Activated naive CD8-positive, alpha-beta T cell treated with anti-CD3 and anti-CD28 coated beads, Interleukin-2, amount 10 ng/mL, durations not matched to agents 7 days and 5 days (primary cell): ENCODE measurements at regions of chr7 and their contacts with region 1.

Region 1: GRCh38 chr7:158863611-158864506 is 7.5 kb downstream of the DYNC2I1 start:
- DNase-seq: peak; percentile 48
- ATAC-seq: peak; percentile 48
- H3K4me3 Mint-ChIP-seq: peak overlapping the region; percentile 85
- H3K27ac Mint-ChIP-seq: peak overlapping the region; percentile 92
- H3K4me1 Mint-ChIP-seq: peaks cover 53% of the 10 kb centered on the region
- H3K27me3 Mint-ChIP-seq: no peaks in the 10 kb centered on the region

Region 2: GRCh38 chr7:158638001-158638400 is 225.9 kb before region 1 on chr7:
- POLR2A ChIA-PET with region 1: no interaction called
- DNase-seq: no peak
- ATAC-seq: no peak
- H3K4me3 Mint-ChIP-seq: no peak overlapping the region
- H3K27ac Mint-ChIP-seq: no peak overlapping the region
- H3K4me1 Mint-ChIP-seq: no peaks in the 10 kb centered on the region
- H3K27me3 Mint-ChIP-seq: no peaks in the 10 kb centered on the region

Region 3: GRCh38 chr7:158704704-158705468 is 159.0 kb before region 1 on chr7 and contains the start of gene NCAPG2:
- POLR2A ChIA-PET with region 1: interaction called, 12 read pairs
- DNase-seq: peak; percentile 99
- ATAC-seq: peak; percentile 98
- H3K4me3 Mint-ChIP-seq: peak within 1 kb of the TSS; percentile 95
- H3K27ac Mint-ChIP-seq: peak within 1 kb of the TSS; percentile 91
- H3K4me1 Mint-ChIP-seq: peaks cover 39% of the 10 kb centered on the region
- H3K27me3 Mint-ChIP-seq: no peaks in the 10 kb centered on the region
- total RNA-seq, gene NCAPG2: 123 to 126 TPM

Region 4: GRCh38 chr7:158782761-158783401 is 81.0 kb before region 1 on chr7:
- POLR2A ChIA-PET with region 1: no interaction called
- DNase-seq: no peak
- ATAC-seq: no peak
- H3K4me3 Mint-ChIP-seq: no peak overlapping the region
- H3K27ac Mint-ChIP-seq: no peak overlapping the region
- H3K4me1 Mint-ChIP-seq: peaks cover 17% of the 10 kb centered on the region
- H3K27me3 Mint-ChIP-seq: no peaks in the 10 kb centered on the region

Region 5: GRCh38 chr7:158811461-158811860 is 52.4 kb before region 1 on chr7:
- POLR2A ChIA-PET with region 1: interaction called, 15 read pairs
- DNase-seq: no peak
- ATAC-seq: peak; percentile 7
- H3K4me3 Mint-ChIP-seq: peak overlapping the region; percentile 74
- H3K27ac Mint-ChIP-seq: peak overlapping the region; percentile 91
- H3K4me1 Mint-ChIP-seq: peaks cover 65% of the 10 kb centered on the region
- H3K27me3 Mint-ChIP-seq: no peaks in the 10 kb centered on the region

Region 6: GRCh38 chr7:158824028-158824427 is 39.8 kb before region 1 on chr7:
- POLR2A ChIA-PET with region 1: interaction called, 12 read pairs
- DNase-seq: no peak
- ATAC-seq: peak; percentile 77
- H3K4me3 Mint-ChIP-seq: peak overlapping the region; percentile 32
- H3K27ac Mint-ChIP-seq: peak overlapping the region; percentile 77
- H3K4me1 Mint-ChIP-seq: peaks cover 48% of the 10 kb centered on the region
- H3K27me3 Mint-ChIP-seq: no peaks in the 10 kb centered on the region

Region 7: GRCh38 chr7:158847451-158847866 is 16.4 kb before region 1 on chr7:
- POLR2A ChIA-PET with region 1: interaction called, 14 read pairs
- DNase-seq: no peak
- ATAC-seq: peak; percentile 85
- H3K4me3 Mint-ChIP-seq: peak overlapping the region; percentile 87
- H3K27ac Mint-ChIP-seq: peak overlapping the region; percentile 97
- H3K4me1 Mint-ChIP-seq: peaks cover 32% of the 10 kb centered on the region
- H3K27me3 Mint-ChIP-seq: no peaks in the 10 kb centered on the region

Region 8: DNA sequence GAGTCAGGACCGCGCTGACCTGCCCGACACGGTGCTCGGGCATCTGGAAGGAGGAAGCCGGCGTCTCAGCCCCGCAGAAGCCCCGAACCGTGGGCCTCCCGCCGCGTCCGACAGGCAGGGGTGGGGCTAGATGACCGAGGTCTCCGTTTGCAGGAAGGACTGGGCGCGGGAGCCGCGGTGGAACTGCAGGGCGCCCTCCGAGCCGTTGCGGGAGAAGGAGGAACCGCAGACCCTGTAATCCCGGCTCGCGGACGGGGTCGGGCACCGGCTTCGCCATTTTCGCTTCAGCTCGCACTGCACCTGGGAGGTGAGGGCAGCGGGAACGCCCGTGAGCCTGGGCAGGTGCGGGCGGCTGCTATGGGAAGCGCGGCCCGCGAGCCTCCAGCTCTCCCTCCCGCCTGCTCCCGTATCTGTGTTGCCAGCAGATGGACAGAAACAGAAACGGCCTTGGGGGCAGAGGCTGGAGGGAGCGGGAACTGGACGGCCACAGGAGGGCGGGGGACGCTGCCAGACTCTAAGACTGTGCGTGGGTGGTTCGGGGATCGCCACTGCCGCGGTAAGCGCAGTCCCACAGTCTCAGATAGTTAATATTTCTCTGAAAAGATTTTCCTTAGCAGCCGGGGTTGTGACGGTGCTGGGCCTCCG is 166.8 kb after region 1 on chr7:
- POLR2A ChIA-PET with region 1: no interaction called
- DNase-seq: peak; percentile 32
- ATAC-seq: peak; percentile 20
- H3K4me3 Mint-ChIP-seq: peak overlapping the region; percentile 28
- H3K27ac Mint-ChIP-seq: no peak overlapping the region
- H3K4me1 Mint-ChIP-seq: no peaks in the 10 kb centered on the region
- H3K27me3 Mint-ChIP-seq: peaks cover 19% of the 10 kb centered on the region

Region 9: DNA sequence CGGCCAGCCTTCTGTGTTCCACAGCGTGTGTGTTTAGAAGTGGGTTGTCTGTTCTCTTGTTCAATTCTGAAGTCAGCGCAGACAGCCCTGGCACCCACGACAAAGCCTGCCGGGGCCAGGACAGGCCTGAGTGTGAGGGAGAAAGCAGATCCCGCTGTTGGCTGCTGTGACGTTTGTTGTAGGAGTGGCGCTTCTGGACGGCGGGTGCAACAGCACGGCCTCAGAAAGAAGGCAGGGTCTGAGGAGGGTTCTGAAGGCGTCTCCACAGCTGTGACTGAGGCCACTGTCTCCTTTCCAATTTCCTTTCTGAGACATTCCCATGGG is 204.6 kb after region 1 on chr7:
- POLR2A ChIA-PET with region 1: no interaction called
- DNase-seq: no peak
- ATAC-seq: peak; percentile 21
- H3K4me3 Mint-ChIP-seq: no peak overlapping the region
- H3K27ac Mint-ChIP-seq: no peak overlapping the region
- H3K4me1 Mint-ChIP-seq: peaks cover 12% of the 10 kb centered on the region
- H3K27me3 Mint-ChIP-seq: no peaks in the 10 kb centered on the region